ENCODE measurements at regions of chr4 and their contacts with region 1.

Region 1: GRCh38 chr4:89434364-89434988 is 126.9 kb upstream of the GPRIN3 start:
- DNase-seq: no peak
- ATAC-seq: peak; percentile 88

Region 2: GRCh38 chr4:89158884-89159503 is 275.5 kb before region 1 on chr4:
- intact Hi-C with region 1: loop called in 1 of 2 experiments (anchors 10 kb)
- DNase-seq: no peak
- ATAC-seq: peak; percentile 67

Region 3: DNA sequence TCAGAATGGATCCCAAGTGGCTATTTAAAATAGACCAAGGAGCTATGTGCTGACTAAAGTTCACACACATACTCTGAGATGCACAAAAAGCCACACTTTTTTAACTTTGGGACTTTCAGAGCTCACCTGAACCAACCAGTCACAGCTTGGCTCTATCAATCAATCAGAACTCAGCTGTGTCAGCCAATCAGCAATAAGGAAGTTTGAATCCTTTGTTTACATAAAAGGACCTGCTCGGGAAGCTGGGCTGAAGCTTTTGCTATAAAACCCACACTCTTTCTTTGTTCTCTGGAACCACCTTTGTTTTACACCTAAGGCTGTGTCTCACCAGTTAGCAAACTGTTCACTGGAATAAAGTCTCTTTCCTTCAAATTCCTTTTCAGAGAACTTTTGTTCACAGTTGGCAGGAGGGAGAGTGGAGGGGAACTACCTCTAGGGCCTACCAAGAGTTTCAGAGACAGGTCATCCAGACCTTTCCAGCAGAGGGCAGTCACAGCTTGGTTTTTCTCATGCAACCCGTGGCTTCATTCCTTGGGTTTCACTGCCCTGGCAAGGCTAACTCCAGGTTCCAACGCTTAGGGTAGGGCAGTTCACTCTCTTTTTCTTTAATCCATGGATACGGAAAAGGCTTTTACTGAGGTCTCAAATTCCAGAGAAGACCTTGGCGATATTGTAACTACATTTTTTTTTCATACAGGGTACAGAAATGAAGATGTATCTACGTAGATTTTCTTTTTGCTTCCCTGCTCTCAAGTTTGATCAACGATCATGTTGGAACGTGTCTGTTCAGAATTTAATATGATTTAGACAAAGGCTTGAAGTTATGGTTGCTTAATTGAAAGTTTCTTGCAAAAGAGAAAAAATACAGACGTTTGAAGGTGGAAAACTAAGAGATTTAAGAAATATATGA is 207.6 kb before region 1 on chr4:
- intact Hi-C with region 1: loop called (anchors 5 to 10 kb)
- DNase-seq: peak; percentile 86 to 90
- ATAC-seq: peak; percentile 96

Region 4: GRCh38 chr4:89949782-89950387 is 515.4 kb after region 1 on chr4:
- intact Hi-C with region 1: no loop called
- DNase-seq: no peak
- ATAC-seq: no peak